Common myeloid progenitor, CD34-positive (primary cell): ENCODE measurements at regions of chr22 and their contacts with region 1.

Region 1: DNA sequence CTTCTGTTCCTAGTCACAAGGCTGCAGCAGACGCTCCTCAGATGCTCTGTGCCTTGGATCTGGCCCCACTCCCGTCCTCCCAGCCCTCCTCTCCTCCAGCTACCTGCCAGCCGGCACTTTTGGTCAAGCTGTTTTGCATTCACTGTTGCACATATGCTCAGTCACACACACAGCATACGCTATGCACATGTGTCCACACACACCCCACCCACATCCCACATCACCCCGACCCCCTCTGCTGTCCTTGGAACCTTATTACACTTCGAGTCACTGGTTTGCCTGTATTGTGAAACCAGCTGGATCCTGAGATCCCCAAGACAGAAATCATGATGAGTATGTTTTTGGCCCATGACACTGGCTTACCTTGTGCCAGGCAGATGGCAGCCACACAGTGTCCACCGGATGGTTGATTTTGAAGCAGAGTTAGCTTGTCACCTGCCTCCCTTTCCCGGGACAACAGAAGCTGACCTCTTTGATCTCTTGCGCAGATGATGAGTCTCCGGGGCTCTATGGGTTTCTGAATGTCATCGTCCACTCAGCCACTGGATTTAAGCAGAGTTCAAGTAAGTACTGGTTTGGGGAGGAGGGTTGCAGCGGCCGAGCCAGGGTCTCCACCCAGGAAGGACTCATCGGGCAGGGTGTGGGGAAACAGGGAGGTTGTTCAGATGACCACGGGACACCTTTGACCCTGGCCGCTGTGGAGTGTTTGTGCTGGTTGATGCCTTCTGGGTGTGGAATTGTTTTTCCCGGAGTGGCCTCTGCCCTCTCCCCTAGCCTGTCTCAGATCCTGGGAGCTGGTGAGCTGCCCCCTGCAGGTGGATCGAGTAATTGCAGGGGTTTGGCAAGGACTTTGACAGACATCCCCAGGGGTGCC is 109.8 kb downstream of the BCR start:
- DNase-seq: peak; percentile 66 to 81 (median 79)
- H3K4me3 ChIP-seq: no peak overlapping the region
- H3K27ac ChIP-seq: no peak overlapping the region
- H3K4me1 ChIP-seq: no peaks in the 10 kb centered on the region
- H3K27me3 ChIP-seq: no peaks in the 10 kb centered on the region

Region 2: GRCh38 chr22:23187871-23188700 is 102.0 kb before region 1 on chr22:
- CTCF ChIA-PET with region 1: interaction called, 10 read pairs
- POLR2A ChIA-PET with region 1: no interaction called
- DNase-seq: no peak
- H3K4me3 ChIP-seq: peak overlapping the region in 1 of 7 experiments; percentile 5
- H3K27ac ChIP-seq: peak overlapping the region; percentile 29 to 57
- H3K4me1 ChIP-seq: peaks cover 15 to 90% (median 72%) of the 10 kb centered on the region in 4 experiments
- H3K27me3 ChIP-seq: no peaks in the 10 kb centered on the region